Activated T-helper 1 cell treated with anti-CD3 and anti-CD28 coated beads, Interleukin-12 subunit alpha, Interleukin-12 subunit beta, Interleukin-2, Interleukin-4 antibody, amounts not matched to agents 30 ng/mL and 10 ng/mL and 1 ng/mL, durations not matched to agents 14 hours and 24 hours and 36 hours (primary cell): ENCODE measurements at regions of chr5 and their contacts with region 1.

Region 1: GRCh38 chr5:76269932-76270610 is 133.0 kb upstream of the IQGAP2 start:
- DNase-seq: peak; percentile 33
- H3K4me3 Mint-ChIP-seq: peak overlapping the region; percentile 62
- H3K27ac Mint-ChIP-seq: peak overlapping the region; percentile 91
- H3K4me1 Mint-ChIP-seq: peaks cover 61% of the 10 kb centered on the region
- H3K27me3 Mint-ChIP-seq: no peaks in the 10 kb centered on the region

Region 2: DNA sequence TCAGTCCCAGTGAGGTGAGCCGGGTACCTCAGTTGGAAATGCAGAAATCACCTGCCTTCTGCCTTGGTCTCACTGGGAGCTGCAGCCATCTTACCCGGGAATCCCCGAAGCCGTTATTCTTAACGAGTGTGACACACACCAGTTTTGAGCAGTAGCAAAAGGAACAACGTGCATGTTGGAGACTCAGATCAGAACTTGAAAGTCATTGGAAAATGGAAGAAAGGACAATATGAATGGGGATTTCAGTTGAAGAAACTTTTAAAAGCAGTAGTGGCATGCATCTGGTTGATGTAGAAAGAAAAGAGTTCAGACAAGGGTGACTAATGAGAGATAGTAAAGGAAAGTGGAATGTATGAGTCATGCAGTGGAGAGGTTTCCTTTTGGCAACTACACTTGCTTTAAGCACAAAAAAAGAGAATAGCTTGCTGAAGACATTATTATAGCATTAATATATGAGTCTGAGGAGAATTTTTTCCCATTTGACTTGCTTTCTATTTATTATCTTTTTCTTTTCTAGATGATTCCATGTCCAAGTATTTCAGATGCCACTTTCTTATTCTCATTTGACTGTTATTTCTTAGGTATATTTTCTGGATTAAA is 703.3 kb before region 1 on chr5:
- intact Hi-C with region 1: loop called (anchors 1 kb)
- DNase-seq: peak; percentile 39
- H3K4me3 Mint-ChIP-seq: peak overlapping the region; percentile 29
- H3K27ac Mint-ChIP-seq: peak overlapping the region; percentile 81
- H3K4me1 Mint-ChIP-seq: peaks cover 53% of the 10 kb centered on the region
- H3K27me3 Mint-ChIP-seq: no peaks in the 10 kb centered on the region

Region 3: DNA sequence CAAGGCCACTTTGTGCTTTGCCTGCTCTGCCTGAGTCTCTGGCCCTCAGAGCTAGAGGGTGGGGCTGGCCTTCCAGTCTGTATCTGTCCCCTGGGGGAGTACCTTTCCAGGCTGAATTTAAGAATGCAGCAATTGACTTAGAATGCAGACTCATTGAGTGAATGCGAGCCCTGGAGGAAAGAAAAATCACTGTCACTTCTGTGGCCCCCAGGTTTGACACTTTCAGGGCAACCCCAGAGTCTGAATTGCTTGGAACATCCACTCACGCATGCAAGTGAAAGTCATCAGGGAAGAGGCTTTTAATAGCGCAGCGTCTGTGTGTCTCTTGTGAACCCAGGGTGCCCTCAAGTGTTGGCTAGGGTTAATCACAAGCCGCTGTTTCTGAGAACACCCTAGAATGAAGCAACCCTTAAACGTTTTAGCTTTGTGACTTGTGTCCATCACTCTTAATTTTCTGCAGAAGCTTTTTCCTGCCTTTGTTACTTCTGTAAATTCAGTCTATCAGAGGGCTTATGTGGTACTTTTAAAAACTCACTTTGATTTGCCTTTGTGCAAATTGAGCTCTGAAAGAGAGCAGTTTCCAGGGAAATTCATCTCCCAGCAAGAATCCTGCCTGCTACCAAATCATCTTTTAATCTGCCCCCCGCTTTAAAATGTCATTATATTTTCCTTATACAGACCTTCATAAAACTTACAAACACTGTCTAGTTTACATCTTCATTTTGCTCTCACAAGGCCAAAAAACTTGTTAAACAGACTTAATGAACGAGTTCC is 13.8 kb before region 1 on chr5:
- intact Hi-C with region 1: loop called (anchors 1 kb)
- DNase-seq: peak; percentile 55
- H3K4me3 Mint-ChIP-seq: no peak overlapping the region
- H3K27ac Mint-ChIP-seq: no peak overlapping the region
- H3K4me1 Mint-ChIP-seq: no peaks in the 10 kb centered on the region
- H3K27me3 Mint-ChIP-seq: peaks cover 22% of the 10 kb centered on the region

Region 4: GRCh38 chr5:76325876-76326491 is 55.9 kb after region 1 on chr5:
- intact Hi-C with region 1: loop called (anchors 2 kb)
- DNase-seq: peak; percentile 50
- H3K4me3 Mint-ChIP-seq: peak overlapping the region; percentile 44
- H3K27ac Mint-ChIP-seq: peak overlapping the region; percentile 84
- H3K4me1 Mint-ChIP-seq: peaks cover 63% of the 10 kb centered on the region
- H3K27me3 Mint-ChIP-seq: no peaks in the 10 kb centered on the region

Region 5: DNA sequence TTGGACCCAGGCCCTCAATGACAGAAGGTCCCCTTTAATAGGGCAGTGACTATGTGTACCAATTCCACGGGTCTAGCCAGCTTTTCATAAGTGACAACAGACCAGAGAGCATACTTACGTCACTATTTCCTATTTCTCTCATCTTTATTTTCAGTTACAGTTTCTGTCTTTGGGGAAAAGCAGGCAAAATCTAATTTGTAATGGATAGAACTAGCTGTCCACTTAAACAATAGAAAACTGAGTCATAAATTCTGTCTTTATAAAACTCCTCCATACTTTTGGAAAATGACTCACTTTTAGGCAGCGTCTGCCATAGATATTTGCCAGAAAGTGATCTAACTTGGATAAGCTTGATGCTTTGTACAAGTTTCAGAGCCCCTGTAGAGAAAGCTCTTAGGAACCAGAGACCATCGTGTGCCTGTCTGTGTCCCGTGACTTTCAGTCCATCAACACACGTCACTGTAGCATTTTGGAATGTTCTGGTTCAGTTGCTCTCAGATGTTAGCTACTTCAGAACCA is 251.2 kb after region 1 on chr5:
- intact Hi-C with region 1: loop called (anchors 1 kb)
- DNase-seq: no peak
- H3K4me3 Mint-ChIP-seq: peak overlapping the region; percentile 63
- H3K27ac Mint-ChIP-seq: peak overlapping the region; percentile 91
- H3K4me1 Mint-ChIP-seq: peaks cover 58% of the 10 kb centered on the region
- H3K27me3 Mint-ChIP-seq: no peaks in the 10 kb centered on the region

Region 6: DNA sequence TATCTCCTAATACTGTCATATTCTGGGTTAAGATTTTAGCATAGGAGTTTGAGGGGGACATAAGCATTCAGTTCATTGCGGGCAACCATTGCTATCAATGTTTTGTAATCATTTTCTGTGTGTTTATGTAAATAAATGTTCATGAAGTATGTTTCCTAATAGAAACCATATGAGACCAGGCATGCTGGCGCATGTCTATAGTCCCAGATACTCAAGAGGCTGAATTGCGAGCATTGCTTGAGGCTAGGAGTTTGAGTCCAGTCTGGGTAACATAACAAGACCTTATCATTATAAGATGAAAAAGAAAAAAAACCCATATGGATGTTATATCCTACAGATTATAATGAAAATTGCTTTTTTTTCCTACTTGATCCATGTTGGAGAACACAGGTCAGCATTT is 262.0 kb after region 1 on chr5:
- intact Hi-C with region 1: no loop called
- DNase-seq: no peak
- H3K4me3 Mint-ChIP-seq: no peak overlapping the region
- H3K27ac Mint-ChIP-seq: no peak overlapping the region
- H3K4me1 Mint-ChIP-seq: peaks cover 44% of the 10 kb centered on the region
- H3K27me3 Mint-ChIP-seq: no peaks in the 10 kb centered on the region

Region 7: DNA sequence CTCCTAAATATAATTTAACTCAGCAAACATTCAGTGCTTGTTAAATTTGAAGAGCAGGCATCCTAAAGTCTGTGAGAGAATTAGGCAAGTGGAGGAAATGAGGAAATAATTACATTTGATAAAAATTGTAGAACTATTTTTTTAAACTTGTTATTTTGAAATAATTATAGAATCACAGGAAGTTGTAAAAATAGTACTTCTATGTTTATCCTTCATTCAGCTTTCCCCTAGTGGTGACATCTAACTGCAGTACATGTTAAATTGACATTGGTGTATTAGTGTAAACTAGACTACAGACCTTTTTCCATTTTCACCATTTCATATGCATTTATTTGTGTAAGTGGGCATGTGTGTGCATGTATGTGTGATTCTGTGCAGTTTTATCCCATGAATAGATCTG is 301.5 kb after region 1 on chr5:
- intact Hi-C with region 1: no loop called
- DNase-seq: no peak
- H3K4me3 Mint-ChIP-seq: no peak overlapping the region
- H3K27ac Mint-ChIP-seq: no peak overlapping the region
- H3K4me1 Mint-ChIP-seq: no peaks in the 10 kb centered on the region
- H3K27me3 Mint-ChIP-seq: no peaks in the 10 kb centered on the region

Region 8: DNA sequence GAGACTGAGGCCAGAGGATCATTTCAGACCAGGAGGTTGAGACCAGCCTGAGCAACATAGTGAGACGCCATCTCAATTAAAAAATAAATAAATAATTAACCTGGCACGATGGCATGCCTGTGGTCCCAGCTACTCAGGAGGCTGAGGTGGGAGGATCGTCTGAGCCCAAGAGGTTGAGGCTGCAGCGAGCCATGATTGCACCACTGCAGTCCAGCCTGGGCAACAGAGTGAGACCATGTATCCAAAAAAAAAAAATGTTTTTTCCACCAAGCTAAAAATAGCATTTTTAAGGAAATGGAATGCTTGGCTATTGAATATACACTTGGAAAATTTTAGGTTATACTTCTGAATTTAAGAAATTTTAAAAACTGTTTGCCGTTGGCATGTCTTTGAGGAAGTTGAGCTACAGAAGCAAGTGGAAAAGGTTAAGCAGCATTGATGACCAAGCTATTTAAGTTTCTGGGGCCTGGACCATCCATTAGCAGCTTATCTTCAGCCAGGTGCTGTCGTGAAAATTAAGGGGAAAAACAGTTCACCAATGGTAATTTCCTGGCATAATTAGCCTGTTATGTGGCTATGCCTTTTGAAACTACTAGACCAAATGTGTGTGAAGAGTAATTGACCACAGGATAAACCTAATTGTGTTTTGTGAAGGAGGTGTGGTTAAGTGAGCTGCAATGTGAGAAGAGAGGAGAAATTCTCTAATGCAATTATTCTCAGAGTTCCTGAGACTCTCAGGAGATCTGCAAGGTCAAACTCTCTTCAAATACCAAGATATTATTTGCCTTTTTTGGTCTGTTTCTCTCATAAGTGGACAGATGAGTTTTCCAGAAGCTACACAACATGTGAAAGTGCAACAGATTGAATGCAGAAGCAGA is 466.8 kb after region 1 on chr5:
- intact Hi-C with region 1: loop called (anchors 2 kb)
- DNase-seq: no peak
- H3K4me3 Mint-ChIP-seq: no peak overlapping the region
- H3K27ac Mint-ChIP-seq: peak overlapping the region; percentile 57
- H3K4me1 Mint-ChIP-seq: peaks cover 63% of the 10 kb centered on the region
- H3K27me3 Mint-ChIP-seq: no peaks in the 10 kb centered on the region